GM12878 (cell line): ENCODE measurements at regions of chr12 and their contacts with region 1.

Region 1: DNA sequence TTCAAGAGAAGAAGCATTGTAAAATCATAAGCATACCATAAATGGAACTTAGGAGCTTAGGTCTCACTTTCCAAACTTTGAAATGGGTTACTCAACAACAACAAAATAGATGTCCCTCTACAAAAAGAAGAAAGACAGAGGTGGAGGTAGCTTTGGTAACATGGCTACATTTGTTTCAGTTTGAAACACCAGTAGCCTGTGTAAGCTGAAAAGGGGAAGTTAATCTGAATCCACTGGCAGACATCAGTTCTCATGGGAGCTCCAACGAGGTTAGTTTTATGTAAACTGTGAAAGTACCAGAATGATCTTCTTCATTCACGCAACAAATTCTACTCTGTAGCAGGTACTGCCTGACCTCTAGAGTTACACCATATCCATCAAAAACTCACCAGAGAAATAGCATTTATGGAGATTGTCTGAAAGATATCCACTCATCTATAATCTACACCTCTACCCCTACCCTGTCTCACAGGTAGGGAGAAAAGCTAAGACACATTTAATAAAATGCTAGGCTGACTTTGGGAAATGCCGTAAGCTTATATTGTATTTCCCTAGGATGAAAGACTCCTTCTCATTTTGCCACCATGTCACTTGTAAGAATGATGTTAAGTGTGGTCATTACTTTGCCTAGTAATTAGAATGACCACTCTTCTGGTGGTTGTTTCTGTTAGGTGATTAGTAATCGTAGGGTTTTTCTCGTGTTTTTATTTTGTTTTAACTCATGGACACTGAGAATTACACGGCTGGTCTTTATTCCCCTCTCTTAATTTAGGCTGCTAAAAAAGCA is 224.1 kb downstream of the ASCL1 start:
- DNase-seq: peak; percentile 88
- ATAC-seq: peak; percentile 96
- H3K4me3 ChIP-seq: no peak overlapping the region
- H3K27ac ChIP-seq: peak overlapping the region; percentile 45; the same call in 1 of the 2 replicates
- H3K4me1 ChIP-seq: no peaks in the 10 kb centered on the region
- H3K27me3 ChIP-seq: no peaks in the 10 kb centered on the region
- CTCF ChIP-seq: peak in 2 of 3 experiments; percentile 6 to 49; a peak in 2 of 6 replicates
- EP300 ChIP-seq: peak in 1 of 2 experiments; percentile 68; a peak in 2 of 4 replicates
- POLR2A ChIP-seq: no peak
- RAD21 ChIP-seq: peak; percentile 71

Region 2: GRCh38 chr12:102948941-102949352 is 232.6 kb before region 1 on chr12:
- CTCF ChIA-PET with region 1: interaction called, 39 read pairs
- POLR2A ChIA-PET with region 1: interaction called, 3 read pairs
- RAD21 ChIA-PET with region 1: interaction called, 62 read pairs
- SMC1A ChIA-PET with region 1: interaction called, 72 read pairs
- in situ Hi-C with region 1: no loop called
- intact Hi-C with region 1: loop called (anchors 2 kb)
- DNase-seq: no peak
- ATAC-seq: peak; percentile 32
- H3K4me3 ChIP-seq: no peak overlapping the region
- H3K27ac ChIP-seq: no peak overlapping the region
- H3K4me1 ChIP-seq: peaks cover 8% of the 10 kb centered on the region
- H3K27me3 ChIP-seq: no peaks in the 10 kb centered on the region; a peak in 1 of 4 replicates
- CTCF ChIP-seq: peak; percentile 88 to 94 (median 90)
- EP300 ChIP-seq: no peak
- POLR2A ChIP-seq: no peak
- RAD21 ChIP-seq: peak; percentile 88

Region 3: GRCh38 chr12:102990419-102990818 is 191.1 kb before region 1 on chr12:
- CTCF ChIA-PET with region 1: interaction called, 14 read pairs
- POLR2A ChIA-PET with region 1: no interaction called
- RAD21 ChIA-PET with region 1: interaction called, 29 read pairs
- SMC1A ChIA-PET with region 1: interaction called, 27 read pairs
- in situ Hi-C with region 1: no loop called
- intact Hi-C with region 1: loop called (anchors 2 kb)
- DNase-seq: no peak
- ATAC-seq: peak; percentile 49
- H3K4me3 ChIP-seq: no peak overlapping the region
- H3K27ac ChIP-seq: no peak overlapping the region
- H3K4me1 ChIP-seq: no peaks in the 10 kb centered on the region; the same call in 1 of the 2 replicates
- H3K27me3 ChIP-seq: no peaks in the 10 kb centered on the region
- CTCF ChIP-seq: 0 out of 6 replicates have a peak, but pooled peaks of 1 of the 3 experiments have one; percentile 14
- EP300 ChIP-seq: no peak
- POLR2A ChIP-seq: no peak
- RAD21 ChIP-seq: peak; percentile 46; the same call in 1 of the 2 replicates

Region 4: DNA sequence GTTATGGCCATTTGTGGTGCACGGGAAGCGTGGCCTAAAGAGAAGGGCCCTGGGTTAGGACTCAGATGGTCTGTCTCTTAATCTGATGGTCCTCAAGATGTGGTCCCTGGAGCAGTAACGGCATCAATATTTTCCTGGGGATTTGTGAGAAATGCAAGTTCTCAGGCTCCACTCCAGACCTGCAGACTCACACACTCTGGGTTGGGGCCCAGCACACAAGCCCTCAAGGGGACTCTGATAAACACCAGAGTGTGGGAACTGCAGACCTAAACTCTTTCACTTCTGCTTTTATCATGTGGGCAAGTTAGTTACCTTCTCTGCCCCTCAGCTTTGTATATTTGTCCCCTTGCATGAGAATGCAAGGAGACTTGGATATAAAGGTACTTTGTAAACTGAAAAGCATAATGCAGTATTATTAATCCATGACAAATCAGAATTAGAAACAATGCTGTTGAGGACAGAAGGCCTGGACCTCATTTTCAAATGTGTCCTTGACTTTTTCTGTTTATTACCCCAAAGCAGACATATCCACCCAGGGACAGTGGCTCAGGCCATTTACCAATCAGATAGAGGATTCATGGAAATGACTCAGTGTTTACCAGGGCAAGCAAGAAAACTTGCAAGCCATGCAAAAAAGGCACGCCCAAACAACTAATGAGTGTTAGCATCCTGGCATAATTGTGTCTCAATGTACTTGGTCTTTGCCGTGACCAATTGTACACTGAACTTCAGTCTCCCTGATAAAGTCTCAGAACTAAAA is 67.1 kb before region 1 on chr12:
- CTCF ChIA-PET with region 1: interaction called, 8 read pairs
- POLR2A ChIA-PET with region 1: interaction called, 5 read pairs
- RAD21 ChIA-PET with region 1: interaction called, 16 read pairs
- SMC1A ChIA-PET with region 1: interaction called, 49 read pairs
- in situ Hi-C with region 1: no loop called
- intact Hi-C with region 1: loop called (anchors 1 kb)
- DNase-seq: peak; percentile 95
- ATAC-seq: peak; percentile 98
- H3K4me3 ChIP-seq: no peak overlapping the region
- H3K27ac ChIP-seq: peak overlapping the region; percentile 80
- H3K4me1 ChIP-seq: peaks cover 19% of the 10 kb centered on the region
- H3K27me3 ChIP-seq: no peaks in the 10 kb centered on the region
- CTCF ChIP-seq: no peak
- EP300 ChIP-seq: peak; percentile 73 to 94; a peak in 3 of 4 replicates
- POLR2A ChIP-seq: no peak
- RAD21 ChIP-seq: peak; percentile 47

Region 5: DNA sequence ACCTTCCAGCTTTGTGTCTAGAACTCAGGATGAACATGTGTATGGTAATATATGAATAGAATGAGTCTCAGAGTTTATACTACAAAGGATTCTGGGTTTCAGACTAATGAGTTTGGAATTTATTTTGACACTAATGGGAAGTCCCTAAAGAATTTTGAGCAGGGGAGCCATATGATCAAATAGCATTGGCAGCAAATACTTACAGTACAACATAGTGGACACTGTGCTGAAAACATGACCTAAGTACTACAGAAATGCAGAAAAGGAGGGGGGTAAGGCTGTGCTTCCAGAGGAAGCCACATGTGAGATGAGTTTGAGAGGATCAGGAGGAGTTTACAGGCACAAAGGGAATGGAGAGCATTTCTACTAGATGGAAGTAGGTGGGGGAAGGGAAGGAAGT is 88.4 kb after region 1 on chr12:
- CTCF ChIA-PET with region 1: interaction called, 5 read pairs
- POLR2A ChIA-PET with region 1: no interaction called
- RAD21 ChIA-PET with region 1: interaction called, 12 read pairs
- SMC1A ChIA-PET with region 1: interaction called, 20 read pairs
- in situ Hi-C with region 1: no loop called
- intact Hi-C with region 1: no loop called
- DNase-seq: no peak
- ATAC-seq: 0 out of 3 replicates have a peak, but pooled peaks have one; percentile 6
- H3K4me3 ChIP-seq: no peak overlapping the region
- H3K27ac ChIP-seq: no peak overlapping the region
- H3K4me1 ChIP-seq: no peaks in the 10 kb centered on the region
- H3K27me3 ChIP-seq: no peaks in the 10 kb centered on the region
- CTCF ChIP-seq: no peak
- EP300 ChIP-seq: no peak
- POLR2A ChIP-seq: no peak
- RAD21 ChIP-seq: no peak

Region 6: DNA sequence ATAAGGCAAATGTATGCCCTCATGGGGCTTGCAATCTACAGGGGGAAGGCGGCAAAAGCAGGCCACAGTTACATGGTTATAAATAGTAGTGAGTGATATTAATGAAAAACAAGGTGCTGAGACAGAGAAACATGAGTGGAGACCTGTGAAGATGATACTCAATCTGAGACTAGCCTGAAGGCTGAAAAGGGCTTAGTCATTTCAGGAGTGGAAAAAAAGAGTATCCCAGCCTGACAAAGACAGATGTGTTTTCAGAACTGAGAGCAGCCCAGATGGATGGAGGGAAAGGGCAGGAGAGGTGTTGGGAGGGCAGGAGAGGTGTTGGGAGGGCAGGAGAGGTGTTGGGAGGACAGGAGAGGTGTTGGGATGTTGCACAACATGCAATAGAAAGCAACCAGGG is 132.3 kb after region 1 on chr12:
- CTCF ChIA-PET with region 1: interaction called, 3 read pairs
- POLR2A ChIA-PET with region 1: no interaction called
- RAD21 ChIA-PET with region 1: interaction called, 5 read pairs
- SMC1A ChIA-PET with region 1: interaction called, 13 read pairs
- in situ Hi-C with region 1: no loop called
- intact Hi-C with region 1: no loop called
- DNase-seq: peak; percentile 26
- ATAC-seq: peak; percentile 76
- H3K4me3 ChIP-seq: no peak overlapping the region
- H3K27ac ChIP-seq: no peak overlapping the region
- H3K4me1 ChIP-seq: 0 out of 2 replicates have a peak, but pooled peaks cover 5% of the 10 kb centered on the region
- H3K27me3 ChIP-seq: no peaks in the 10 kb centered on the region
- CTCF ChIP-seq: no peak
- EP300 ChIP-seq: peak in 1 of 2 experiments; percentile 45; a peak in 2 of 4 replicates
- POLR2A ChIP-seq: no peak
- RAD21 ChIP-seq: no peak

Region 7: GRCh38 chr12:103495479-103496456 is 314.2 kb after region 1 on chr12 and contains the start of gene C12orf42:
- CTCF ChIA-PET with region 1: interaction called, 7 read pairs
- POLR2A ChIA-PET with region 1: no interaction called
- RAD21 ChIA-PET with region 1: interaction called, 8 read pairs
- SMC1A ChIA-PET with region 1: interaction called, 21 read pairs
- in situ Hi-C with region 1: loop called (anchors 5 kb)
- intact Hi-C with region 1: no loop called
- DNase-seq: peak; percentile 63
- ATAC-seq: peak; percentile 88
- H3K4me3 ChIP-seq: peak within 1 kb of the TSS; percentile 72
- H3K27ac ChIP-seq: 0 out of 2 replicates have a peak within 1 kb of the TSS, but pooled peaks have one; percentile 12
- H3K4me1 ChIP-seq: peaks cover 8% of the 10 kb centered on the region; the same call in 1 of the 2 replicates
- H3K27me3 ChIP-seq: no peaks in the 10 kb centered on the region
- CTCF ChIP-seq: peak; percentile 70 to 85 (median 71)
- EP300 ChIP-seq: peak in 1 of 2 experiments; percentile 42; a peak in 1 of 4 replicates
- POLR2A ChIP-seq: no peak
- RAD21 ChIP-seq: peak; percentile 81
- polyA plus RNA-seq, gene C12orf42: 1.8 to 1.9 TPM